Activated CD4-positive, alpha-beta T cell treated with anti-CD3 and anti-CD28 coated beads, Interleukin-2, amount 10 ng/mL, durations not matched to agents 24 days and 14 days (primary cell): ENCODE measurements at regions of chr17 and their contacts with region 1.

Region 1: DNA sequence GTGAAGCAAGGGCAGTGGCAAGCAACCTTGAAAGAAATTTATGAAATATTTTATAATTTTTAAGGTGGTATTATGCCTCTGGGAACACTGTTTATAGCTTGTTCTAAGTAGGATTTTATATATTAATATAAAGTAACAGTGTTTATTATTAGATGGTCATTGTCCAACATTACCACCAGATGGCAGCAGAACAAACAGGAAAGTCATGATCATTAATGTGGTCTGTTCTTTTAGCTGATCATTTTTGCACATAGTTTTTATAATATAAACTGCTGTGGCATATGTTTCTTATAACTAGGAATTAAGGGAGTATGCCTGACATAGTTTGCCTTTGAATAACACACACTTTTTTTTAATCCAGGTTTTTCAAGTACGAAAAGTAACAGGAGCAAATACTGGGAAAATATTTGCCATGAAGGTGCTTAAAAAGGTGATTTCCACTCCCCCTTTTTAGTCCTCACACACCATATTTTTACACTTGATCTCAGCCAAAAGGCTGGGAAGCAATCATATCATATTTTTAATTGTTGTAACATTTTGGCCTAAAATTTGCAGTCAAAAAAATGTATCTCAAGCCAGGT is 21.4 kb downstream of the RPS6KB1 start:
- DNase-seq: peak; percentile 68
- H3K4me3 Mint-ChIP-seq: no peak overlapping the region
- H3K27ac Mint-ChIP-seq: no peak overlapping the region
- H3K4me1 Mint-ChIP-seq: peaks cover 2% of the 10 kb centered on the region
- H3K27me3 Mint-ChIP-seq: no peaks in the 10 kb centered on the region

Region 2: DNA sequence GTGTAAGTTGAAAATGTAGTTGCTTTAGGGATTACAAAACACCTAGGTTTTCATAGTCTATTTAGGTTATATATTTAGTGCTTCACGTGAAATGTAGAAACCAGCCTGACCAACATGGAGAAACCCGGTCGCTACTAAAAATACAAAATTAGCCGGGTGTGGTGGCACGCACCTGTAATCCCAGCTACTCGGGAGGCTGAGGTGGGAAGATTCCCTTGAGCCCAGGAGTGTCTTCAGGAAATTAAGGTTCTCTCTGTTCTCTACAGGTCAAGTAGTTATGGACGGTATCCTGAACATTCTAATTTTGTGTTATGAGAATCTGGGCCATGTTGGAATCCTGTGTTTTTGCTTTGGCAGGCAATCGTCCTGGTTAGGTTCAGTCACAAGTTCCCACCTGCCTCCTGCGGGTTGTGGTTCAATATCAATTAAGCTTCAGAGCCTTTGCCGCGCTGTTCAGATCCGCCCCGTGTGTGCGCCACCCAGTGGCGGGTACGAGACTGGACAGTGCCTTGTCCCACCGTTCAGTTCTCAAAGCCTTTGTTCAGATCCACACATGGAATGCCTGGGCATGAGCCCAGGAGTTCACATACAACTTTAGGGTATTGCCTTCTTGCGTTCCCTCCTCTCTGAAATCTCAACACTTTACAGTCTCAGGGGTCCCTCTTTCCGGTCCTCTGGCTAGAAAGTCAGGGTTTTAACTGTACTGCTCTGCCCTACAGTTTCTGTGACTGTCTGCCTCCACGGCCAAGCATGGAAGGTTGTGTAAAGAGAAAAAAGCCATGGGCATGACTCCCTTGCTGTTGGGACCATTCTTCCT is 122.6 kb after region 1 on chr17:
- intact Hi-C with region 1: loop called (anchors 5 kb)
- DNase-seq: peak; percentile 92
- H3K4me3 Mint-ChIP-seq: peak overlapping the region; percentile 48
- H3K27ac Mint-ChIP-seq: peak overlapping the region; percentile 20
- H3K4me1 Mint-ChIP-seq: peaks cover 7% of the 10 kb centered on the region
- H3K27me3 Mint-ChIP-seq: peaks cover 18% of the 10 kb centered on the region